ENCODE measurements at regions of chr6 and their contacts with region 1.

Region 1: DNA sequence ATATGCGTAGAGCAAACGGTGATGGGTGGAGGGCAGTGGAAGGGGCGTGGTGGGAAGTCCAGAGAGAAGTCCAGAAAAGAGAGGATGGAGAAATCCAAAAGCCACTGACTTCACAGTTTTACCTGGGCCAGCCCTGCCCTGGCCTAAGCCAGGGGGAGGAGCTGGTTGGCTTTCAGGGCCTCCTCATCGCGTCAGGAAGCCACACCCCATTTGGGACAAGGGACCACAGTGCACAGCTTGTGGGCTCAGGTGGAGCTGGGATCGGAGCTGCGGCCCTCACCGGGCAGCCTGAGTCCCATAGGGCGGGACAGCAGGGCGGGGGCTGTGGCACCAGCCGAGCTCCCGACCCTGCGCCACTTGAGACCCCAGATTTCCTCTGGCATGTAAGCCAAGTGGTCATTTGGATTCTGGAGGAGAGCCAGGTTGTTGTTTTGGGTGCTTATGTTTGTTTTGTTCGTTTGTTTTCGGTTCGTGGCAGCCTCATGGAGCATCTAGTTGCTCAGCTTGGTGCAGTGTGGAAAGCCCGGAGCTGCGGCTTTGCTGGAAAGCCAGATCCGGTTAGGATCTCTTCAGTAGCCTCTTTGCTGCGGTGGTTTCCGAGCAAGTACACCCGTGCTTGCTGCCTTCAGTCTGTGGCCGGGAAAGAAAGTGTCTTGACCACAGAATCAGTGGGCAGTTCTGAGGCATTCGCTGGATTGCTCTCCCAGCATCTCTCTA is 42.2 kb downstream of the RIOK1 start:
- DNase-seq: no peak
- ATAC-seq: peak in 1 of 4 donors; percentile 7
- H3K4me3 ChIP-seq: no peak overlapping the region
- H3K27ac ChIP-seq: no peak overlapping the region
- H3K4me1 ChIP-seq: no peaks in the 10 kb centered on the region
- H3K27me3 ChIP-seq: no peaks in the 10 kb centered on the region
- CTCF ChIP-seq: no peak
- POLR2A ChIP-seq: no peak

Region 2: DNA sequence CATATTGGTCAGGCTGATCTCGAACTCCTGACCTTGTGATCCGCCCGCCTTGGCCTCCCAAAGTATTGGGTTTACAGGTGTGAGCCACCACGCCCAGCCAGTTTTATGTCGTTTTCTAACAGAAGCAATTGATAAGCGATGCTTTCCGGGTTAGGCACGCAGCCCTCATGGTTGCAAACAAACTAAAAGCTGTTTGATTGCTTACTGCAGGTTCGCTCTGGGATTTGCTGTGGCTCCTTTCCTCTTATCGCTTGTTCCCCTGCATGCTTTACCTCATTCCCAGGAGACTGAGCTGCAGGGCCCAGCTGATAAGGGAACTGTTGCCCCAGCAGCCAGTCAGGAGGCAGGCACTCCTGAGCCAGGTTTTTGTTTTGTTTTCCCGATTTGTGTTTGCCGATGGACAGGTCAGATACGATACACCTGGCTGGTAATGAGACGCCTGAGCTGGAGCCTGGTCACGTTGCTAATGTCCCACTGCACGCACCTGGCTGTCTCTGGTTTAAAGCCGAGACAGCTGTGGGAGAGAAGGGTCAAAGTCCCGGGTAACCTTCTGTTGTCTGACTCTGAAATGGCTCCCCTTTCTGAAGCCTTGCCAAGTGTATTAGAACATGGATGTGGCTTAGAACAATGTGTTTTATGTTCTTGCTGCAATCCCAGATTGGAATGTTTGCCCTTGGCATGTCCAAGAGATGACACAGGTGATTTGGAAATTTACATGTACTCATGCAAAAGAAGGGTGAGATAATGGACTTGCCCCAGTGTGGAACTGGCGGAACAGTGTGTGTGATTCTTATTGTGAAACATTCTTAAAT is 129.5 kb after region 1 on chr6:
- intact Hi-C with region 1: loop called in 4 of 10 experiments (anchors 5 to 10 kb)
- DNase-seq: peak in 2 of 5 donors; percentile 45 to 58
- ATAC-seq: peak; percentile 85 to 93 (median 88)
- H3K4me3 ChIP-seq: peak overlapping the region in 3 of 12 donors; percentile 9 to 13 (median 11)
- H3K27ac ChIP-seq: peak overlapping the region in 11 of 12 donors; percentile 53 to 82 (median 69)
- H3K4me1 ChIP-seq: peaks cover 0 to 16% (median 1%) of the 10 kb centered on the region in 12 donors
- H3K27me3 ChIP-seq: peaks cover 0 to 28% (median 0%) of the 10 kb centered on the region in 9 donors
- CTCF ChIP-seq: no peak
- POLR2A ChIP-seq: no peak

Region 3: GRCh38 chr6:7691675-7692452 is 260.0 kb after region 1 on chr6:
- intact Hi-C with region 1: no loop called
- DNase-seq: peak in 1 of 5 donors; percentile 41
- ATAC-seq: peak in 3 of 4 donors; percentile 39 to 72 (median 66)
- H3K4me3 ChIP-seq: no peak overlapping the region
- H3K27ac ChIP-seq: no peak overlapping the region
- H3K4me1 ChIP-seq: peaks cover 0 to 2% (median 0%) of the 10 kb centered on the region in 12 donors
- H3K27me3 ChIP-seq: peaks cover 0 to 27% (median 2%) of the 10 kb centered on the region in 9 donors
- CTCF ChIP-seq: no peak
- POLR2A ChIP-seq: no peak

Measured in heart left ventricle (tissue), 16 donors.